ENCODE measurements at regions of chr20 and their contacts with region 1.

Region 1: DNA sequence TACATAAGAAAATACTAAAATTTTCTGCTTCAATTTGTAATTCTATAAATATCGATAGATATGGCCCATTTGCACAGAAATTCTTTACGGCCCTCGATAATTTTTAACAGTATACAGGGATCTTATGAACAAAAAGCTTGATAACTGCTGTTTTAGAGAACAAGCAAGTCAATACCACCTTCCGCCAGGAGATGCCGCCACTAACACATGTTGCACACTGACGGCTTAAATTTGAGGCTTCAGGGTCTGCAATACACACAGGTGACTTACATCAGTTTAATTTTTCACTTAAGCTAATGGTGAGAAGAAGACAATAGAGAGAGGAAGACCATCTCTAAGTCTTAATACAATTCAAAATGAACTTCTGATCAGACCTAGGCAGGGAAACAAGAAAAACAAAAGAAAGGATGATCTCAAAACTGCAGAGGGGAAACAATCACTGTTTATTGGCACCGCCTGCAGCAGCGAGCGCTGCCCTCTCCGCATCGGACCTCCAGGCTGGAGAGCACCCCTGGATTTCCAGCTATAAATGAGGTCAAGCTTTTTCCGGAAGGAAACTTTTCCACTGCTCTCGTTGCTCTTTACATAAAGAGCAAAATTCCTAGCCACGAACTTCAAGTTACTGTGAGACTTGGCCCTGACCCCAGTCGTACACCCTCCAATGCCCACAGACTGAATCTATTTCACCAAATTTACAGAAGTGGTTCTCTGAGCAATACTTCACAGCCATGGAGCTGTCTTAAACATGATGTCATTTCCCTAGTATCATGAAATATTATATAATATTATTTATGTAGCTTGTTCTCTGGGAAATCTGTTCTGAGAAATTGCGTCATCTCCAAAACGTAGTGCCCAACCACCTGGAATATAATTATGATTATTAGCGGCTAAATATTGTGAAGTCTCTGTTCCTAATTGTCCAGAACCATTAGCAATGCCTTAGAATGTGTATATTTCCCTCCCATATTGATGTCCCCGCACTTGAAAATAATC is 54.1 kb downstream of the OTOR start:
- DNase-seq: peak; percentile 62

Region 2: DNA sequence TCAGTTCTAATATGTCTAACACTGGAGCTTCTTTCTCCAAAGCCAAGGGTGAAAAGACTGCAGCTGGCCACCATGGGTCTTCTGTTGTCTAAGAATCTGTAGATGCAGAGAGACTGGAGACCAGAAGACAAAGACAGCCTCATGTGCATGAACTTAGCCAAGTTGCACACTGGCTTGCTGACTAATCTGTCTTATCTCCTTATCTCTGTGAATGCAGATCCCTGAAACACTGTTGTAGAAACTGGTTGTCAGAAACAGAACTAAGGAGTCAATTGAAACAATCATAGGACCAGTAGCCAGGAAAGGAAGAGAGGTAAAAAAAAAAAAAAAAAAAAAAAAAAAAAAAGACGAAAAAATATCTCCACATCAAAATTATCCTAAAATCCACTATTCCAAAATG is 619.3 kb after region 1 on chr20:
- in situ Hi-C with region 1: loop called (anchors 10 kb)
- DNase-seq: no peak